ENCODE measurements at regions of chr2 and their contacts with region 1.

Region 1: DNA sequence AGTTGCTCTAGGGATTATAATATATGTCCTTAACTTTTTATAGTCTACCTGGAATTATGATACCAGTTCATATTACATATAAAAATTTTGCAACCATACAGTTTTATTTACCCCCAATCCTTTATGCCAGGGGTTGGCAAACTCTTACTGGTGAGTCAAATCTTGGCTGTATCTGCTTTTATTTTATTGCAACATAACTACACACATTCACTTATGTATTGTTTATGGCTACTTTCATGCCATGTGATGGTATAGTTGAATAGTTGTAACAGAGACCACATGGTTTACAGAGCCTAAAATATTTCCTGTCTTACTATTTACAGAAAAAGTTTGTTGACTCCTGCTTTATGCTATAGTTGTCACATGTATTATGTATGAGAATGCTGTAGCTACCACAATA is 25.8 kb upstream of the DLX2 start:
- DNase-seq: no peak
- H3K4me3 ChIP-seq: no peak overlapping the region
- H3K27ac ChIP-seq: no peak overlapping the region
- H3K4me1 ChIP-seq: no peaks in the 10 kb centered on the region
- H3K27me3 ChIP-seq: peaks cover 0 to 4% (median 0%) of the 10 kb centered on the region in 7 donors
- CTCF ChIP-seq: no peak
- POLR2A ChIP-seq: no peak

Region 2: DNA sequence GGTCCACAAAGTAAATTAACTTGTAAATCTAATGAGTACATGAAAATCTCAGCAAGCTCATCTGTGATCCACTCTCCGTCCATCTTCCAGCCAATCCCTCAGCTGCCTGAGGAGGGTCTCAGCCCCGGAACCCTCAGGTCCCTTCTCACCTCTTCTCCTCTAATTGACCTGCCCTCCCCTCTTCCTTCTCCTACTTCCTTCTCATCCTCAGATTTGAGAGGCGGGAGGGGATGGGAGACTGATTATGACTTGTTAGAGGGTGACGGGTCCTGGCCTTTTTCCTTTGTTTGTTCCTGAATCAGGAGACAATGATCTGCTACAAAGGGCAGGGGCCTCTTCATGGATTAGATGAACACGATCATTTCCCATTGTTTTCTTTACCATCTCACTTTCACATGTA is 526.1 kb before region 1 on chr2:
- intact Hi-C with region 1: loop called (anchors 10 kb)
- DNase-seq: no peak
- H3K4me3 ChIP-seq: no peak overlapping the region
- H3K27ac ChIP-seq: no peak overlapping the region
- H3K4me1 ChIP-seq: peaks cover 0 to 7% (median 2%) of the 10 kb centered on the region in 6 donors
- H3K27me3 ChIP-seq: peaks cover 0 to 39% (median 0%) of the 10 kb centered on the region in 7 donors
- CTCF ChIP-seq: no peak
- POLR2A ChIP-seq: no peak

Region 3: GRCh38 chr2:172196768-172197431 is 68.4 kb after region 1 on chr2:
- intact Hi-C with region 1: no loop called
- DNase-seq: peak; percentile 79
- H3K4me3 ChIP-seq: no peak overlapping the region
- H3K27ac ChIP-seq: peak overlapping the region in 2 of 8 donors; percentile 22 to 33
- H3K4me1 ChIP-seq: peaks cover 0 to 5% (median 0%) of the 10 kb centered on the region in 6 donors
- H3K27me3 ChIP-seq: peaks cover 0 to 9% (median 0%) of the 10 kb centered on the region in 7 donors
- CTCF ChIP-seq: no peak
- POLR2A ChIP-seq: no peak

Measured in spleen (tissue), 13 donors.